ENCODE measurements at regions of chr12 and their contacts with region 1.

Region 1: GRCh38 chr12:89257101-89257739 is 95.1 kb downstream of the DUSP6 start:
- DNase-seq: no peak
- CTCF ChIP-seq: no peak

Region 2: DNA sequence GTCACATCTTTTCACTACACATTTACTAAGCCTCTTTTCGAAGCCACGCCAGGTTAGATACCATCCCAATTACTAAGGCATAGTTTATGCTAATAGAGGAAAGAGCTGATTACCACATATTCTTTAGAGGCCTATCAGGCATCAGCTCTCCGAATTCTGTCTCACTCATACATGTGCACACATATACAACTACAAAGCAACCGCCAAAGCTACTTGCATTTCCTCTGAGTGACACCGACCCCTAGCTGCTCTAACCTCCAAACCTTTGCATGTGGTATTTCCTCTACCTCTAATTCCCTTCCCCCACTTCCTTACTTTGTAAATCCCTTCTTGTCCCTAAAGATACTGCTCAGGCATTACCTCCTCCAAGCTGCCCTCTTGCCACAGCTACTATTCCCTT is 12.1 kb before region 1 on chr12:
- CTCF ChIA-PET with region 1: interaction called, 14 read pairs
- POLR2A ChIA-PET with region 1: no interaction called
- DNase-seq: no peak
- CTCF ChIP-seq: no peak

Region 3: GRCh38 chr12:89280833-89281538 is 23.8 kb after region 1 on chr12:
- CTCF ChIA-PET with region 1: no interaction called
- POLR2A ChIA-PET with region 1: no interaction called
- DNase-seq: no peak
- CTCF ChIP-seq: no peak

Measured in GM10248 (cell line).